ENCODE measurements at regions of chr2 and their contacts with region 1.

Region 1: GRCh38 chr2:171893824-171894611 is at the start of gene SLC25A12:
- DNase-seq: peak; percentile 86 to 92 (median 88)
- ATAC-seq: peak; percentile 93 to 99 (median 98)
- H3K4me3 ChIP-seq: peak within 1 kb of the TSS; percentile 75 to 98 (median 86)
- H3K27ac ChIP-seq: peak within 1 kb of the TSS; percentile 39 to 94 (median 84)
- H3K4me1 ChIP-seq: peaks cover 0 to 42% (median 19%) of the 10 kb centered on the region in 12 donors
- H3K27me3 ChIP-seq: no peaks in the 10 kb centered on the region
- CTCF ChIP-seq: no peak
- POLR2A ChIP-seq: peak in 1 of 2 donors; percentile 84
- total RNA-seq, gene SLC25A12: 74.8 to 128 (median 120) TPM

Region 2: GRCh38 chr2:171811245-171811628 is 82.8 kb before region 1 on chr2:
- intact Hi-C with region 1: loop called in 1 of 10 experiments (anchors 5 kb)
- DNase-seq: no peak
- ATAC-seq: peak in 2 of 4 donors; percentile 22 to 28
- H3K4me3 ChIP-seq: no peak overlapping the region
- H3K27ac ChIP-seq: no peak overlapping the region
- H3K4me1 ChIP-seq: peaks cover 0 to 14% (median 0%) of the 10 kb centered on the region in 12 donors
- H3K27me3 ChIP-seq: no peaks in the 10 kb centered on the region
- CTCF ChIP-seq: peak in 9 of 12 donors; percentile 16 to 54 (median 41)
- POLR2A ChIP-seq: no peak

Region 3: DNA sequence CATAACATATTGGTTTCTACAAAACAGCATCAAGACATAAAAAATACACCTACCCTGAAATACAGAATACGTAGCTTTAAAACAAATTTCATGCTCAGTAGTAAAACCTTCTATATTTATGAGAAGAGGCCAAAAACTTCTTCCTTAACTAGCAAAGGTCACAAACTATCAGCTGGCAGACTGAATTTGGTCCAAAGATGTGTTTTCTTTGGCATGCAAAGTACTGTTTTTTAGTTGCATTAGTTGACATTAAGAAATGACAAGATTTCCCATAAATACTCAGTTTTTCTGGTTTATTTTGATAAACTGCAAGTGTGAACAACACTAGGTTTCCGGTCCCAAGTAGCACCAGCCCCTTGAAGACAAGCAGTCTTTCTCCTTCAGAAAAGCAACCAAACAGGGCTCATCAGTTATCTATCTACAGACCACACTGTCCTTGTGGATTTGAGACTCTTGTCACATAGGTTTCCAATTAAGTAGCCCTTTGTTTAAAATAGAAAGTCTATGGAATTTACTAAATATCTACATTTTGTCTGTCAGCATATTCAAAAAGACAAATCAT is 35.5 kb before region 1 on chr2:
- intact Hi-C with region 1: loop called in 1 of 10 experiments (anchors 5 kb)
- DNase-seq: no peak
- ATAC-seq: no peak
- H3K4me3 ChIP-seq: no peak overlapping the region
- H3K27ac ChIP-seq: peak overlapping the region in 2 of 12 donors; percentile 17 to 20
- H3K4me1 ChIP-seq: peaks cover 0 to 30% (median 12%) of the 10 kb centered on the region in 12 donors
- H3K27me3 ChIP-seq: no peaks in the 10 kb centered on the region
- CTCF ChIP-seq: no peak
- POLR2A ChIP-seq: no peak

Region 4: GRCh38 chr2:172021955-172022354 is 127.9 kb after region 1 on chr2:
- intact Hi-C with region 1: no loop called
- DNase-seq: peak in 1 of 5 donors; percentile 11
- ATAC-seq: no peak
- H3K4me3 ChIP-seq: peak overlapping the region in 7 of 12 donors; percentile 11 to 43 (median 18)
- H3K27ac ChIP-seq: no peak overlapping the region
- H3K4me1 ChIP-seq: peaks cover 0 to 13% (median 0%) of the 10 kb centered on the region in 12 donors
- H3K27me3 ChIP-seq: no peaks in the 10 kb centered on the region
- CTCF ChIP-seq: no peak
- POLR2A ChIP-seq: no peak

Measured in heart left ventricle (tissue), 16 donors.